Activated CD4-positive, alpha-beta T cell treated with anti-CD3 and anti-CD28 coated beads for 36 hours (primary cell): ENCODE measurements at regions of chr19 and their contacts with region 1.

Region 1: DNA sequence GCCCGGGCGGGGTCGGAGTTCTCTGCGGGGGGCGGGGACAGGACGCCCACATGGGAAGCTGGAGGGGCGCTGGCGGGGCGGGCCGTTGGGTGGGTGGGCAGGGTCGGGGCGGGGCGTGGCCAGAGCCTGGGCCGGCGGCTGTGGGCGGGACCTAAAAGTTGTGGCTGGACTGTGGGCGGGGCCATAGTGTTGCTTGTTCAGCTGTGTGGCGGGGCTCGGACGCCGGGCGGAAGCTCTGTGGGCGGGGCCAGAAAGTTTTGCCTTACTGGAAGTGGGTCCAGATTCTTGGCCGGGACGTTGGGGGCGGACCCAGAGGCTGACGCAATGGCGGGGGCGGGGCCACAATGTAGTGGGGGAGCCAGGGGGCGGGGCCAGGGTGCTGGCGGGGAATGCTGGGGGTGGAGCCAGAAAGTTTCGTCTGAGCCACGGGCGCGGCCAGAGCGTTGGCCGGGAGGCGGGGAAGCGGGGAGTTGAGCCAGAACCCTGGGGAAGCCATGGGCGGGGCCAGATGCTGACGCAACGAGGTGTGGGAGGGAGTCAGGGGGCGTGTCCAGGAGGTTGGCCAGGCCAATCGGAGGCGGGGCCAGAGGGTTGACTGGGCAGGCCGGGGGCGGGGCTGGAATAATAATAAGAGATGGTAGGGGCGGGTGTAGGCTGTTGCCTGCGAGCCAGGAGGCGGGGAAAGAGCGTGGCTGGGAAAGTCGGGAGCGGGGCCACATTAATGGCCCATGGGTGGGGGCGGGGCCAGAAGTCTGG is 541 bp downstream of the CCDC9 start:
- DNase-seq: peak; percentile 100
- ATAC-seq: peak; percentile 86
- H3K4me3 Mint-ChIP-seq: peak overlapping the region; percentile 90
- H3K27ac Mint-ChIP-seq: peak overlapping the region; percentile 93
- H3K4me1 Mint-ChIP-seq: peaks cover 31% of the 10 kb centered on the region
- H3K27me3 Mint-ChIP-seq: no peaks in the 10 kb centered on the region

Region 2: DNA sequence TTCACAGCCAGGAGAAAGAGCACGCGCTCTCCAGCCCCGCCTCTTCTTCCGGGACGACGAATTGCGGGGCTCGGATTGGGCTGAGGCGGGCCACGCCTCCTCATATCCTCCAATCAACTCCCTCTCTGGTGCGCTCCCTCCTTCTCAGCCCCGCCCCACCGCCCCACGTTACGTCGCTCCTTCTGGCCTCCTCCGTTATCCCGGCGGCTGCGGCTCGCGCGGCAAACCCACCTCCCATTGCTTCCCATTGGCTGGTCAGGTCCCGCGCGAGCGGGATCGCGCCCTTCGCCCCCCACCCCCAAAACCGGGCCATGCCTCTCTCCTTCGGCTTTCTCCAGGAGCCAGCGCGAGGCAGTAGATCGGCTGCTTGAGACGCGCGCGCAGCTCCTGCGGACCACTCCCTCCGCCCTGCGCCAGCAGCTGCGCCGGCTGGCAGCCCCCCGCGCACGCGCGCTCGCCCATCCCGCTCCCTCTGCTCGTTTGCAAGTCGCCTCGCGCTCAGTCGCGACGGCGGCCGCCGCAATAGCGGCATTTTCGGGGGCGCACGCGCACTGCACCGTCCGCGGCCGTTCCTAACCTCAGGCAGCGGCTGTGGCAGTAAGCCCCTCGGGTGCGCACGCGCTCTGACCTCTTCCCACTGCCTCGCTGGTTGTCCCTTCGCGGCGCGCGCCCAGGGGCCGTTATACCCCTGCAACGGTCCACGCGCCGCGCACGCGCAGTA is 396.6 kb before region 1 on chr19:
- CTCF ChIA-PET with region 1: no interaction called
- POLR2A ChIA-PET with region 1: no interaction called
- intact Hi-C with region 1: loop called in 1 of 2 experiments (anchors 1 kb)
- DNase-seq: peak; percentile 99
- ATAC-seq: peak; percentile 82
- H3K4me3 Mint-ChIP-seq: no peak overlapping the region
- H3K27ac Mint-ChIP-seq: peak overlapping the region; percentile 78
- H3K4me1 Mint-ChIP-seq: peaks cover 25% of the 10 kb centered on the region
- H3K27me3 Mint-ChIP-seq: no peaks in the 10 kb centered on the region

Region 3: GRCh38 chr19:46932346-46932745 is 324.5 kb before region 1 on chr19:
- CTCF ChIA-PET with region 1: no interaction called
- POLR2A ChIA-PET with region 1: no interaction called
- intact Hi-C with region 1: no loop called
- DNase-seq: no peak
- ATAC-seq: no peak
- H3K4me3 Mint-ChIP-seq: no peak overlapping the region
- H3K27ac Mint-ChIP-seq: no peak overlapping the region
- H3K4me1 Mint-ChIP-seq: peaks cover 56% of the 10 kb centered on the region
- H3K27me3 Mint-ChIP-seq: no peaks in the 10 kb centered on the region

Region 4: GRCh38 chr19:47190167-47190727 is 66.6 kb before region 1 on chr19:
- CTCF ChIA-PET with region 1: interaction called, 3 read pairs
- POLR2A ChIA-PET with region 1: interaction called, 6 read pairs
- intact Hi-C with region 1: loop called in 1 of 2 experiments (anchors 1 kb)
- DNase-seq: peak; percentile 84
- ATAC-seq: peak; percentile 57
- H3K4me3 Mint-ChIP-seq: peak overlapping the region; percentile 48
- H3K27ac Mint-ChIP-seq: peak overlapping the region; percentile 84
- H3K4me1 Mint-ChIP-seq: peaks cover 71% of the 10 kb centered on the region
- H3K27me3 Mint-ChIP-seq: no peaks in the 10 kb centered on the region

Region 5: DNA sequence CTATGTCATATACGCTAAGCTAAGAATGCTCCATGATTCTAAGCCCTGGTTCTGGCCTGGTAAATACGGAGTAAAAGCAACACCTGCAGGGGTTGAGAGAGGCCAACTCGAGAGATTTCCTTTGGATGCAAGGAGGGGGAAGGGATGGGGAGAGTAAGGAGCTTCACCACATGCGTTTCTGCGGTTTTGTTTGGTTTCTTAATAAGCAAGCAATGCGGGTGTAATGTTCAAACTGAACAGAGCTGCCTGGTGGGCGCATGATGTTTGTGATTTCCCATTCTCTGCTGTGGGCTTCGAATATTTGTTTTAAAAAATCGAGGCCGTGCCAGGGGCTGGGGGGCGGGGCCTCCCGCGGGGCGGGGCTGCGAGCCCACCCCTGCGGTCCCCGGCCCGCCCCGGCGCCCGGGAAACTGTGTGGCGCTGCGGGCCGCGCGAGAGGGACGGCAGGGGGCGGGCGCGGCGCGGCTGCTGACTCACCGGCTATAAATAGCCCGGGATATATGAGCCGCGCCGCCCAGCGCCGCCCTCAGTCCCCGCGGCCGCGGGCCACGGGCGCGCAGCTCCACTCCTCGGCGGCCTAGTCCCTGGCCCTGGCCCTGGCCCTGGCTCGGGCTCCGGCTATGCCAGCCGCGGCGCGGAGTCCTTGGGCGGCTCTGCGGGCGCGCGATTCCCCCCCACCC is 31.0 kb before region 1 on chr19:
- CTCF ChIA-PET with region 1: no interaction called
- POLR2A ChIA-PET with region 1: interaction called, 10 read pairs
- intact Hi-C with region 1: loop called in 1 of 2 experiments (anchors 1 kb)
- DNase-seq: peak; percentile 93
- ATAC-seq: peak; percentile 70
- H3K4me3 Mint-ChIP-seq: peak overlapping the region; percentile 77
- H3K27ac Mint-ChIP-seq: no peak overlapping the region
- H3K4me1 Mint-ChIP-seq: peaks cover 16% of the 10 kb centered on the region
- H3K27me3 Mint-ChIP-seq: no peaks in the 10 kb centered on the region

Region 6: GRCh38 chr19:47296036-47296435 is 39.2 kb after region 1 on chr19:
- CTCF ChIA-PET with region 1: no interaction called
- POLR2A ChIA-PET with region 1: no interaction called
- intact Hi-C with region 1: no loop called
- DNase-seq: peak; percentile 87
- ATAC-seq: peak; percentile 98
- H3K4me3 Mint-ChIP-seq: no peak overlapping the region
- H3K27ac Mint-ChIP-seq: no peak overlapping the region
- H3K4me1 Mint-ChIP-seq: peaks cover 2% of the 10 kb centered on the region
- H3K27me3 Mint-ChIP-seq: no peaks in the 10 kb centered on the region

Region 7: DNA sequence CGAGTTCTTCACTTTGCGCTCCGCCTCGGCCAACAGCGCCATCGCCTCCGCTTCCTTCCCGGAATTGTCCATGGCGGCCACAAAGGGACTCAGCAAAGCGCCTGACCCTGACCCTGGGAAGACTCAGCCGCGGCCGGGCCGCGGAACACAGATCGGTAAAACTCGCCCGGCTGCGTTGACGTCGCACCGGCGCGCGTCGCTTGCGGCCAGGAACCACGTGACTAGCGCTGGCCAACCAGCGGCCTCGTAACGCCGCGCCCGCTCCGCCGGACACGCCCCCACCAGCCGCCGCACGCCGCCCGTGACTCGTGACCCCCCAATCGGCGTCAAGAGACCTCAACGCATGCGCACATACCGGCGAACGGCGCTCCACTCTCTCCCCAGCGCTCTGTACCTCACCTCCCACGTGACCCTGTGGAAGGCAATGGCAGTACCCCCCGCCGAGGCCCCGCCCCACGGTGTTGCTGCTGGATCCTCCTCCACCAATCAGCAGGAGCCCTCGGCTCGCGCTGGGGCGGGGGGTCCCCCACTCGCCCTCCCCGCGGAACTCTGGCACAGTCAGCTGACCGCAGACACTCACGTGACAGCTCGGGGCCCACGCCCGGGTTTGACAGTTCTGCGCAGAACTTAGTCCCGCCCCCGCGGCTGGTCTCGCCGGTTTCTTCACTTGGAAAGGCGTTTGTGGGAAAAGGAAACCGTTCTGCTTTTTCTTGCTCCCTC is 258.2 kb after region 1 on chr19 and contains the start of gene NAPA:
- CTCF ChIA-PET with region 1: interaction called, 5 read pairs
- POLR2A ChIA-PET with region 1: interaction called, 3 read pairs
- intact Hi-C with region 1: loop called in 1 of 2 experiments (anchors 1 kb)
- DNase-seq: peak; percentile 100
- ATAC-seq: peak; percentile 98
- H3K4me3 Mint-ChIP-seq: peak within 1 kb of the TSS; percentile 95
- H3K27ac Mint-ChIP-seq: peak within 1 kb of the TSS; percentile 99
- H3K4me1 Mint-ChIP-seq: peaks cover 76% of the 10 kb centered on the region
- H3K27me3 Mint-ChIP-seq: no peaks in the 10 kb centered on the region
- total RNA-seq, gene NAPA: 54.2 to 68.8 TPM

Region 8: GRCh38 chr19:47608074-47608918 is 351.4 kb after region 1 on chr19:
- CTCF ChIA-PET with region 1: no interaction called
- POLR2A ChIA-PET with region 1: no interaction called
- intact Hi-C with region 1: loop called in 1 of 2 experiments (anchors 1 kb)
- DNase-seq: peak; percentile 97
- ATAC-seq: peak; percentile 93
- H3K4me3 Mint-ChIP-seq: peak overlapping the region; percentile 79
- H3K27ac Mint-ChIP-seq: peak overlapping the region; percentile 72
- H3K4me1 Mint-ChIP-seq: peaks cover 27% of the 10 kb centered on the region
- H3K27me3 Mint-ChIP-seq: no peaks in the 10 kb centered on the region